H1 (cell line): ENCODE measurements at regions of chr12 and their contacts with region 1.

Region 1: GRCh38 chr12:82740129-82741000 is 53.7 kb downstream of the TMTC2 start:
- DNase-seq: no peak
- H3K4me3 ChIP-seq: no peak overlapping the region
- H3K27ac ChIP-seq: no peak overlapping the region
- H3K4me1 ChIP-seq: no peaks in the 10 kb centered on the region; a peak in 1 of 7 replicates
- H3K27me3 ChIP-seq: no peaks in the 10 kb centered on the region
- CTCF ChIP-seq: no peak
- EP300 ChIP-seq: no peak
- POLR2A ChIP-seq: no peak
- RAD21 ChIP-seq: no peak

Region 2: DNA sequence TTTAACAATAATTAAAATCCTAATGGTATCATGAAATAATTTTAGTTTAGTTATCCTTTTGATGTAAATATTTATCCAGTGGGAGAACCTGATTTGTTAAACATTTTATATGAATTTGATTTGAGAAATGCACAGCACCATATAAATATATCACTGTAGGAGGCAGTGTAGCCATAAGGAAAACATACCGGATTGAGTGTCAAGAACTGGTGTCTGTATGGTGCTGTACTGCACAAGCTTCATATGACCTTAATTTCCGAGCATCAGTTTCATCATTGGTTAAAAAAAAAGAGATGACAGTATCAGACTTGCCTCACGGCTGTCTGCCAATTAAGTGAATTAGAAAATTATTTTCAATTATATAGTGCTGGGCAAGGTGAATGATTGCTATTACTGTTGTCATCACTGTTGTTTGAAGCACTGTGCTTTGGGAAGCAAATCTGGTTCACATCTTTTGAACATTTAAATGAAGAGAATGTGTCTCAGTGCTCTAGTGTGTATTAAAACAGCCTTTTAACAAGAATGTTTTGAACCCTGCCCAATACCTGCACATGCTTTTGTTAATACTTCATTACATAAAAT is 18.5 kb after region 1 on chr12:
- CTCF ChIA-PET with region 1: interaction called, 13 read pairs
- POLR2A ChIA-PET with region 1: no interaction called
- DNase-seq: no peak
- H3K4me3 ChIP-seq: no peak overlapping the region
- H3K27ac ChIP-seq: no peak overlapping the region
- H3K4me1 ChIP-seq: peaks cover 0 to 11% (median 7%) of the 10 kb centered on the region in 4 experiments; a peak in 3 of 7 replicates
- H3K27me3 ChIP-seq: no peaks in the 10 kb centered on the region
- CTCF ChIP-seq: no peak
- EP300 ChIP-seq: no peak
- POLR2A ChIP-seq: no peak
- RAD21 ChIP-seq: no peak

Region 3: GRCh38 chr12:82886671-82887340 is 146.4 kb after region 1 on chr12:
- CTCF ChIA-PET with region 1: no interaction called
- POLR2A ChIA-PET with region 1: no interaction called
- DNase-seq: no peak
- H3K4me3 ChIP-seq: no peak overlapping the region
- H3K27ac ChIP-seq: no peak overlapping the region
- H3K4me1 ChIP-seq: no peaks in the 10 kb centered on the region
- H3K27me3 ChIP-seq: no peaks in the 10 kb centered on the region
- CTCF ChIP-seq: no peak
- EP300 ChIP-seq: no peak
- POLR2A ChIP-seq: no peak
- RAD21 ChIP-seq: no peak